ENCODE measurements at regions of chr19 and their contacts with region 1.

Region 1: DNA sequence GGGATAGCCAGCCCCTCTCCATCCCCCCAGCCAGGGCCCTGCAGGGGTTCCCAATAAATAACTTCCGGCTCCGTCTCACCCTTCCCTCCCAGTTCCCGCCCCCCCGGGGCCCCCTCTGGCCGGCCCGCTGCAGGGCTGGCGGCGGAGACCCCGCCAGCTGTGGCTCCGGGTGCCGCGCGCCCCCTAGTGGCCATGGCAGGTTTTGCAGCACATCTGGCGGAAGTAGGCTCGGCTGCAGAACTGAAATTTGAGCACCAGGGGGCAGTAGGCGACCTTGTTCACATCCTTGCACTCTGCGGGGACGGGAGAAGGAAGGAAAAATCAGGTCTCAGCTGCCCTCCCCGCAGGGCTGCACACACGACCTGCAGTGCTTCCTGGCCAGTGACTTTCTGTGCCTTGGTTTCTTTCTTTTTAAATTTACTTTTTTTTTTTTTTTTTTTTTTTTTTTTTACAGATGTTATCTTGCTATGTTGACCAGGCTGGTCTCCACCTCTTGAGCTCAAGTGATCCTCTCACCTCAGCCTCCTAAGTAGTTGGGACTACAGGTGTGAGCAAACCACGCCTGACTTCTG is 3.6 kb upstream of the MYO1F start:
- DNase-seq: no peak
- H3K4me3 ChIP-seq: no peak overlapping the region
- CTCF ChIP-seq: peak; percentile 99

Region 2: DNA sequence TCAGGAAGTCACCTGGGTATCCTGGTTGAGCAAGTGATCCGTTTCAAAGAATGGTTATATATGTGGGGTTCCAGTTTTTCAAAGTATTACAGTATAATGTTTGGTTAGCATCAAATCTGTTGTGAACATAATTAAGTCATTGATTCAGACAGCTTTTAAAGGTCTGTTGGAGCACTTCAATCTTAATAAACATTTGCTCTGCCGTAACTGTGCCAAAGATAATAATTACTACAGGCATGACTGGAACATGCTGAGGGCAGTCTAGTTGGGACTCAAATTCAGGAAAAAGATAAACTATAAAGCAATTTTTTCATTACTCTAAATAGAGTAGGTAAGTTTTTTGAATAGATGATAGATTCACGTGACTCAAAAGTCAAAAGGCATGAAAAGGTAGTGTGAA is 112.7 kb before region 1 on chr19:
- CTCF ChIA-PET with region 1: no interaction called
- POLR2A ChIA-PET with region 1: no interaction called
- DNase-seq: no peak
- H3K4me3 ChIP-seq: no peak overlapping the region
- CTCF ChIP-seq: no peak

Region 3: DNA sequence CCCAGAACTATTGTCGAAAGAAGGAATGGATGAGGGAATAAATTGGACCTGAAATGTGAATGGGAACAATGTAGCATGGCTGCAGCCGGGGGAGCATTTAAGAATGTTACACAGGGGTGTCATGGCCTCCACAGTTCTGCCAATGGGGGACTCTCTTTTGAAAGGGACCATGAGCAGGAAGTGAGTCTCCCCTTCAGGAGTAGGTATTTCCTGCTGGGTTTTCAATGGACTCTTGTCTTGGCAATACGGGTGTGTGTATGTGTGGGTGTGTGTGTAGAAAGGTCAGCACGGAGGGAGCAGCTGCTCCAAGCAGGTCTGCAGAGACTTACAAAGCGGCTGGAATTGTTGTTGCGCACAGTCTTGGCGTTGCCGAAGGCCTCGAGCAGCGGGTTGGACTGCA is 28.0 kb before region 1 on chr19:
- CTCF ChIA-PET with region 1: interaction called, 33 read pairs
- POLR2A ChIA-PET with region 1: no interaction called
- DNase-seq: no peak
- H3K4me3 ChIP-seq: no peak overlapping the region
- CTCF ChIP-seq: no peak

Region 4: DNA sequence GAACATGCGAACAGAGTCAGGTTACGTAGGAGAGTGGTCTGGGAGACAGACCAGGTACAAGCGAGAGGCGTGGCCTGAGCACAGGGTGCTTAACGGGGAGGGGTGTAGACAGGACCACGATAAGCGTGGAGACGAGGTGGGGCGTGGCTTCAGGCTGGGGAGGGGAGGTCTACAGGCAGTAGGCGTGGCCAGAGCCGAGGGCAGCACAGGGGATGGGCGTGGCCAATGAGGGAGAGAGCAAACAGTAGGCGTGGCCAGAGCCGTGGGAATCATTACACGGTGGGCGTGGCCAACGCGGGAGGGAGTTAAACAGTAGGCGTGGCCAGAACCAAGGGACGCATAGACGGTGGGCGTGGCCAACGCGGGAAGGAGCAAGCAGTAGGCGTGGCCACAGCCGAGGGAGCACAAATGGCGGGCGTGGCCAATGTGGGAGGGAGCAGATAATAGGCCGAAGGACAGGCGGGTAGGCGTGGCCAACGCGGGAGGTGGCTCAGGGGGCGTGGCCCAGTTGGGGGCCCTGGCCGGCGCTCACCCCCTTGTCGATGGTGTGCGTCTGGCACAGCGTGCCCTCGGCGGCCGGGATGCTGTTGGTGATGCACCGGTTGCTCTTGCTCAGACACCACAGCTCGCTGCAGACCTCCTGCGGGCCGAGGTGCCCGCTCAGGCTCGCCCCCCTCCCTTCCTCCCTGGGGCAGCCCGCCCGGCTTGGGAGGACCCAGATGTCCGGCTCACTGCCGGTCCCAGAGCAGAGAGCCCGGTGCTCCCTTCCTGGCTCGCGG is 11.6 kb after region 1 on chr19:
- CTCF ChIA-PET with region 1: interaction called, 145 read pairs
- POLR2A ChIA-PET with region 1: no interaction called
- DNase-seq: peak; percentile 61
- H3K4me3 ChIP-seq: peak overlapping the region; percentile 51
- CTCF ChIP-seq: no peak

Region 5: GRCh38 chr19:8626842-8627241 is 46.0 kb after region 1 on chr19:
- CTCF ChIA-PET with region 1: interaction called, 30 read pairs
- POLR2A ChIA-PET with region 1: no interaction called
- DNase-seq: no peak
- H3K4me3 ChIP-seq: no peak overlapping the region
- CTCF ChIP-seq: no peak

Region 6: GRCh38 chr19:8678244-8678807 is 97.5 kb after region 1 on chr19:
- CTCF ChIA-PET with region 1: no interaction called
- POLR2A ChIA-PET with region 1: no interaction called
- DNase-seq: no peak
- H3K4me3 ChIP-seq: no peak overlapping the region
- CTCF ChIP-seq: no peak

Region 7: DNA sequence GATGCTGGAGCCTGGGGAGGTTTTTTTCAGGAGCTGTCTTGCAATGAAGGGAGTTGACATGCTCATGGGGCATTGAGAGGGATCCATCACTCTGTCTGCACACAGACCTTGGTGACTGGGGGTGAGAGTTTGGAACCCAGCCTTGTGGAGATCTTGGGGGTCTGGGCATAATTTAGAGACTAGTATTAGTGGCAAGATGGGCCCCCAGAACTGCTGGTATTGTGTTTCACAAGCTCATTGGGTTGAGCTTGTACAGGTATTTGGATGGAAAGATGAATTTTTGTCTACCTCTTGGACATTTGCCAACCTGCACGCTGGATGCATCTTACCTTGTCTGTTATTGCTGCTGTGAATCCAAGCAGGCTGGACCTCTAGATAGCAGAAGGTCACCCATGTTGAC is 140.5 kb after region 1 on chr19 and contains the start of gene OR2Z1:
- CTCF ChIA-PET with region 1: no interaction called
- POLR2A ChIA-PET with region 1: no interaction called
- DNase-seq: no peak
- H3K4me3 ChIP-seq: no peak within 1 kb of the TSS
- CTCF ChIP-seq: no peak

Measured in AG04449 (cell line).